ENCODE measurements at regions of chrX and their contacts with region 1.

Region 1: DNA sequence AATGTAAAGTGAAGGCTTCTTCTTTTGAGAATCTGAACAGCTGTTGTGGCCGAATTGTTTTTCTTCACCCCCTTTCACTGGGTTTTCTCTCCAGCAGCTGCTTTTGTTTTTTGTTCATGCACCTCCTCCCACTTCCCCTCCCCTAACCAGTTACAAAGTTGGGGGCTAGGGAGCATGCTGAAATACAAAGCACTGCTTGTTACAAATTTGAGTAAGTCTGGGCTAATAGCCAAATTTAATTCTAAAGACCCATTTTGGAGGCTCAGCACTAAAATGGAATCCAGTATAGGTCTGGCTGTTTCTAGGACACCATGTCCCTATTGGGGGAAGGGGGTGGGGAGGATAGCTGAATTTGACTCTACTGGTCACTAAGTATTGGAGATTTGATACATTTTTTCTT is 89.2 kb upstream of the GPM6B start:
- DNase-seq: no peak
- H3K4me3 ChIP-seq: no peak overlapping the region
- H3K27ac ChIP-seq: no peak overlapping the region
- H3K4me1 ChIP-seq: no peaks in the 10 kb centered on the region
- H3K27me3 ChIP-seq: no peaks in the 10 kb centered on the region
- CTCF ChIP-seq: no peak
- EP300 ChIP-seq: no peak
- POLR2A ChIP-seq: no peak

Region 2: DNA sequence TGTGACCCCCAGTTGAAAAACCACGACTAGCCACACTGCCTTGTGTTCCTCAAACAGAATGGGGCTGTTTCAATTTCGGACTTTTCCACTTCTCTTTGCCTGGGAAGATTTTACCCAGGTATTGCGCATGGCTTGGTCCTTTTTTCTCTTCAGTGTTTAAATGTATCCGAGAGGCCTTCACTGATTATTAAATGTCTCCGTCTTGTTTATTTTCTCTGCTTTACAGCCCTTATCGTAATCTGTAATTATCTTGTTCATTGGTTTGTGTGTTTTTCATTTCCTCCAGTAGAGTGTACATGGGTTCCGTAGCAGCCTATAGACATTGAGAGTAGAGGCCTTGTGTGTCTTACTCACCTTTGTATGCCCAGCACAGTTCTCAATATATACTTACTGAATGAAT is 969.5 kb after region 1 on chrX:
- in situ Hi-C with region 1: no loop called
- intact Hi-C with region 1: loop called (anchors 5 kb)
- DNase-seq: no peak
- H3K4me3 ChIP-seq: no peak overlapping the region
- H3K27ac ChIP-seq: no peak overlapping the region
- H3K4me1 ChIP-seq: peaks cover 0 to 9% (median 3%) of the 10 kb centered on the region in 4 donors
- H3K27me3 ChIP-seq: no peaks in the 10 kb centered on the region
- CTCF ChIP-seq: no peak
- EP300 ChIP-seq: no peak
- POLR2A ChIP-seq: no peak